CD4-positive, alpha-beta T cell (primary cell): ENCODE measurements at regions of chr1 and their contacts with region 1.

Region 1: GRCh38 chr1:161038523-161039153 is at the start of gene TSTD1:
- DNase-seq: peak; percentile 75 to 96 (median 84)
- ATAC-seq: peak; percentile 89
- H3K4me3 ChIP-seq: peak within 1 kb of the TSS; percentile 99
- H3K4me3 Mint-ChIP-seq: peak within 1 kb of the TSS; percentile 88
- H3K27ac ChIP-seq: peak within 1 kb of the TSS; percentile 86 to 88
- H3K27ac Mint-ChIP-seq: peak within 1 kb of the TSS; percentile 91
- H3K4me1 ChIP-seq: peaks cover 50% of the 10 kb centered on the region
- H3K4me1 Mint-ChIP-seq: peaks cover 41% of the 10 kb centered on the region
- H3K27me3 ChIP-seq: no peaks in the 10 kb centered on the region
- H3K27me3 Mint-ChIP-seq: no peaks in the 10 kb centered on the region
- CTCF ChIP-seq: no peak
- total RNA-seq, gene TSTD1: 38.0 to 40.3 TPM

Region 2: DNA sequence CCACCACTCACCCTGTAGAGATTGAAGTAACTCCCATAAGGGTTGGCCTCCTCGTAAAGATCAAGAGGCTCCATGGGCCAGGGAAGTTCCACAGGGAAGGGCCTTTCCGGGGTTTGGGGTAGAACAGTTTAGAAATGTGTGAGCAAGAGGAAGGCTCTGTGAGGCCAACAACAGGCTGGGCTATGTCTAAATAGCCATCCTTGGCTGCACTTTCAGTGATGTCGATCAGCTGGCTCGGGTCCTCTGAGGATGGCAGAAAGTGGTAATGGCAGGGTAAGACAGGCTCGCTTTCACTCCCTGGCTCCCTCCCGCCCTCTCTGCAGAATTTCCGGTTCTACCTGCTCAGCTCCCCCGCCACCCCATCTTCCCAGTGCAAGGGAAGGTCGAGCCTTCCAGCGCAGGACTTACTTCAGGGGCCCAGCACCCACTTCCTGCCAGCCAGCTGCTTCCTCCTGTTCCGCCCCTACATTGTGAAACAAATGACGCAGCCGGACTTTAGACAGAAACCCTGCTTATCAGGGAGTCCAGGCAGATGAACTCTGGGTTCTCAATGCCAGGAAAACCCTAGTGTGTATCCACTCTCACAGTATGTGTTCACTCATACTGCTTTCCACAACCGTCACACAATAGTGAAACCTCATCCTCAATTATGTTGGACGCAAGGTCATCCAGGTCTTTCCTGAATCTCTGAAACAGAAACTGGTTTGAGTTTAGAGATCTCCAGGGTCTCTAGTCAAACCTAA is 25.0 kb before region 1 on chr1:
- CTCF ChIA-PET with region 1: interaction called, 4 read pairs
- POLR2A ChIA-PET with region 1: interaction called, 11 read pairs
- intact Hi-C with region 1: no loop called
- DNase-seq: peak; percentile 32 to 88 (median 62)
- ATAC-seq: peak; percentile 93
- H3K4me3 ChIP-seq: peak overlapping the region; percentile 51
- H3K4me3 Mint-ChIP-seq: peak overlapping the region; percentile 84
- H3K27ac ChIP-seq: peak overlapping the region; percentile 56 to 87
- H3K27ac Mint-ChIP-seq: peak overlapping the region; percentile 94
- H3K4me1 ChIP-seq: peaks cover 32% of the 10 kb centered on the region
- H3K4me1 Mint-ChIP-seq: peaks cover 29% of the 10 kb centered on the region
- H3K27me3 ChIP-seq: no peaks in the 10 kb centered on the region
- H3K27me3 Mint-ChIP-seq: no peaks in the 10 kb centered on the region
- CTCF ChIP-seq: no peak

Region 3: DNA sequence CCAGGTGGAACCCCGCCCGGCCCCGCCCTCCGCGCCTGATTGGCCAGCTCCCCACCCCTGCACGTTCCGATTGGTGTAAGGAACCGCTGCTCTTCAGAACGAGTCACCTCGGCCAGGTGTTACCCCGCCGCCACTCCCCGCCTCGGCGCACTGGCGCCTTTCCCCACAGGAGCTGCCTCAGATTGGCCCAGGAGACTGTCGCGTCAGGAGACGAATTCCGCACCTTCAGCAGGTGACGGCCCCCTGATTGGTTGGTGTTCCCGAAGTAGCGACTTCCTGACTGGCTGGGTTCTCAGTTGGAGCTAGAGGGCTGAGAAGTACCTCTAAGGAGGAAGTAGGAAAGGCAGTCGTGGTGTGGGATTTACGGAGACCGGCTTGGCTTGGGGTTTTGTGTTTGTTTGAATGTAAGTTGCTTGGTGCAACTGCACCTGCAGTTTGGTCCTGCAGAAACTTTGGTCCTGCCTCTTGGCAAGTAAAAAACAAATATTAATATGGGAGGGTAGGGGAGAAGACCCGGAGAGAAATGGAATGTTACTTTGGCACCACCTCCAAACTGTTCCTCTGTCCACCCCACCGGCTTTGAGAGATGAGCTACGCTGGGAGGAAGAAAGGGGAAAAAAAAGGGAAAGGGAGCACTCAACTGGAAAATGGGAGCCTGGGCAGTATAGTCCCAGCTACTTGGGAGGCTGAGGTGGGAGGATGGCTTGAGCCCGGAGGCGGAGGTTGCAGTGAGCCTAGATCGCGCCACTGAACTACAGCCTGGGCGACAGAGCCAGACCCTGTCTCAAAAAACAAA is 17.3 kb before region 1 on chr1:
- CTCF ChIA-PET with region 1: interaction called, 8 read pairs
- POLR2A ChIA-PET with region 1: interaction called, 46 read pairs
- intact Hi-C with region 1: loop called in 1 of 2 experiments (anchors 2 kb)
- DNase-seq: peak; percentile 79 to 96 (median 90)
- ATAC-seq: peak; percentile 95
- H3K4me3 ChIP-seq: peak overlapping the region; percentile 77
- H3K4me3 Mint-ChIP-seq: peak overlapping the region; percentile 91
- H3K27ac ChIP-seq: no peak overlapping the region
- H3K27ac Mint-ChIP-seq: peak overlapping the region; percentile 81
- H3K4me1 ChIP-seq: peaks cover 19% of the 10 kb centered on the region
- H3K4me1 Mint-ChIP-seq: peaks cover 25% of the 10 kb centered on the region
- H3K27me3 ChIP-seq: no peaks in the 10 kb centered on the region
- H3K27me3 Mint-ChIP-seq: no peaks in the 10 kb centered on the region
- CTCF ChIP-seq: no peak

Region 4: GRCh38 chr1:161098210-161099068 is 59.8 kb after region 1 on chr1 and contains the start of gene KLHDC9:
- CTCF ChIA-PET with region 1: interaction called, 66 read pairs
- POLR2A ChIA-PET with region 1: interaction called, 28 read pairs
- intact Hi-C with region 1: loop called (anchors 1 kb)
- DNase-seq: peak; percentile 38 to 88 (median 58)
- ATAC-seq: peak; percentile 50
- H3K4me3 ChIP-seq: peak within 1 kb of the TSS; percentile 51
- H3K4me3 Mint-ChIP-seq: peak within 1 kb of the TSS; percentile 87
- H3K27ac ChIP-seq: peak within 1 kb of the TSS in 1 of 2 donors; percentile 52
- H3K27ac Mint-ChIP-seq: peak within 1 kb of the TSS; percentile 90
- H3K4me1 ChIP-seq: peaks cover 22% of the 10 kb centered on the region
- H3K4me1 Mint-ChIP-seq: peaks cover 23% of the 10 kb centered on the region
- H3K27me3 ChIP-seq: no peaks in the 10 kb centered on the region
- H3K27me3 Mint-ChIP-seq: peaks cover 6% of the 10 kb centered on the region
- CTCF ChIP-seq: peak; percentile 29
- total RNA-seq, gene KLHDC9: 0.41 TPM in 1 of 2 experiments, not detected in the other

Region 5: DNA sequence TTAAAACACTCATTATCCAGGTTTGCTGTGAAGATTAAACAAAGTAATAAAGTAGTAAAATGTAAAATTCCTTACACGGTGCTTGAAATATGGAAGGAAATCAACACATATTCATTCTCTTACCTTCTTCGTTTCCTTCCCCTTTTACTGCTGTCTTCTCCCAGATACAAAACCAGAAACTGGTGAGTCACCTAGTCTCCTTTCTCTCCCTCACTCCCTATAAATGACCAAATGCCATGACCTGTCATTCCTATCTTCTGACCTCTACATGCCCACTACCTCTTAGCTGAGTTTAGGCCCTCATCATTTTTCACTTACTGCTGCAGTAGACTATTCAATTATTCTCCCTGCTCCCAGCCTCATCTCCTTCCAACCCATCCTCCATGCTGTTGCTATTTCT is 203.7 kb after region 1 on chr1:
- CTCF ChIA-PET with region 1: no interaction called
- POLR2A ChIA-PET with region 1: no interaction called
- intact Hi-C with region 1: no loop called
- DNase-seq: no peak
- ATAC-seq: no peak
- H3K4me3 ChIP-seq: no peak overlapping the region
- H3K4me3 Mint-ChIP-seq: no peak overlapping the region
- H3K27ac ChIP-seq: no peak overlapping the region
- H3K27ac Mint-ChIP-seq: no peak overlapping the region
- H3K4me1 ChIP-seq: no peaks in the 10 kb centered on the region
- H3K4me1 Mint-ChIP-seq: no peaks in the 10 kb centered on the region
- H3K27me3 ChIP-seq: no peaks in the 10 kb centered on the region
- H3K27me3 Mint-ChIP-seq: peaks cover 10% of the 10 kb centered on the region
- CTCF ChIP-seq: no peak